ENCODE measurements at regions of chr1 and their contacts with region 1.

Region 1: DNA sequence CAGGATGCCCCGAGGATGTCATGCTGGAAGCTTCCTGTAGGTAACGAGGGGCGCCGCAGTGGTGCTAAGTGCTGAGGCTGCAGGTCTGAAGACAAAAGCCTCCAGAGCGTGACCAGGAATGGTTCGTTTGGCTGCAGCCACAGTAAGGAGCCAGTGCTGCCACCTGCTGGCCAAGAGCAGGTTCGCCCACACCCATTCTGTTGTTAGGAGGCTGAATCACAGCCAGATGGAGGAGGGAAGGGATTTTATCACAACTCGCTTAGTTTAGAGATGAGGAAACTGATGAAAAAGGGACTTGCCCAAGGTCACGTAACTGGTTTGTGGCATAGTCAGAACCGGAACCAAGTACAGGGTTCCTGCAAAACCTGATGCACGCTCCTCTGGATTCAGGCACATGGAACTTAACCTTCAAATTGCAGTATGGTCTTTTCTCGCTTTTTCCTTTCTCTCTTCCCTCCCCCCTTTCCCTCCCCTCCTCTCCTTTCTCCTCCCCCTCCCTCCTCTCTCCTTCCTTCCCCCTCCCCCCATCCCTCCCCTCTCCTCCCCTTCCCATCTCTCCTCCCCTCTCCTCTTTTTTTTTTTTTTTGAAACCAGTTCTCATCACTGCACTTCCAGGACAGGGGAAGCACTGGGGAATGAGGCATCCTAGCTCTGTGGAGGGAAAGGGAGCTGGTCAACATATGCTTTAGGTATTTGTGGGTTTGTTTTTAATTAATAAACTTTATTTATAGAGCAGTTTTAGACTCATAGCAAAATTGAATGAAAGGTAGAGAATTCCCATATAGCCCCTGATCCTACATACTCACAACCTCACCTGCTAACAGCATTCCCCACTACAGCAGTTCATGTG is 81.8 kb downstream of the MPZL1 start:
- DNase-seq: peak; percentile 86 to 94 (median 92)
- H3K4me3 ChIP-seq: no peak overlapping the region
- H3K27ac ChIP-seq: no peak overlapping the region
- H3K4me1 ChIP-seq: peaks cover 2% of the 10 kb centered on the region
- H3K27me3 ChIP-seq: no peaks in the 10 kb centered on the region
- CTCF ChIP-seq: peak; percentile 79 to 97 (median 83)
- EP300 ChIP-seq: no peak
- POLR2A ChIP-seq: no peak

Region 2: DNA sequence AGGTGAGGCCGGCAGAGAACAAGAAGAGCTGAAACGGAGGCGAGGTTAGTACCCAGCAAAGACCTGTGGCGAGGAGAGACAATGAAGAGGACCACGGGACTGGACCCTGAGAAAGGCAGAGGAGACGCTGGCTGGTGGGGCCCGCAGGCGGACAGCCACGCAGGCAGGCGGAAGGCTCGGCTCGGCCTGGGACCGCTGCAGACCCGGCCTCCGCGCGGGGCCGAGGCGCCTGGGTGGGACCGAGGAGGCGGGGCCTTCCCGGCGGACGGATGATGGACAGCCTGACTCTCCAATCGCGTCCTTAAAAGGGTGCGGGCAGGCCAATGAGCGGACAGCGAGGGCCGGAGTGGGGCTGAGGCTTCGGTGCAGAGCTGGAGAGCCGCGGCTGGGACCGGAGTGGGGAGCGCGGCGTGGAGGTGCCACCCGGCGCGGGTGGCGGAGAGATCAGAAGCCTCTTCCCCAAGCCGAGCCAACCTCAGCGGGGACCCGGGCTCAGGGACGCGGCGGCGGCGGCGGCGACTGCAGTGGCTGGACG is 81.9 kb before region 1 on chr1 and contains the start of gene MPZL1:
- intact Hi-C with region 1: loop called in 2 of 4 experiments (anchors 5 kb)
- DNase-seq: peak; percentile 96 to 98 (median 97)
- H3K4me3 ChIP-seq: peak within 1 kb of the TSS; percentile 79
- H3K27ac ChIP-seq: peak within 1 kb of the TSS; percentile 76 to 95
- H3K4me1 ChIP-seq: peaks cover 10% of the 10 kb centered on the region
- H3K27me3 ChIP-seq: no peaks in the 10 kb centered on the region
- CTCF ChIP-seq: no peak
- EP300 ChIP-seq: no peak
- POLR2A ChIP-seq: peak; percentile 62
- total RNA-seq, gene MPZL1: 43.0 to 114 (median 80.1) TPM

Measured in ovary (tissue), 10 donors.